B cell (primary cell): ENCODE measurements at regions of chr14 and their contacts with region 1.

Region 1: DNA sequence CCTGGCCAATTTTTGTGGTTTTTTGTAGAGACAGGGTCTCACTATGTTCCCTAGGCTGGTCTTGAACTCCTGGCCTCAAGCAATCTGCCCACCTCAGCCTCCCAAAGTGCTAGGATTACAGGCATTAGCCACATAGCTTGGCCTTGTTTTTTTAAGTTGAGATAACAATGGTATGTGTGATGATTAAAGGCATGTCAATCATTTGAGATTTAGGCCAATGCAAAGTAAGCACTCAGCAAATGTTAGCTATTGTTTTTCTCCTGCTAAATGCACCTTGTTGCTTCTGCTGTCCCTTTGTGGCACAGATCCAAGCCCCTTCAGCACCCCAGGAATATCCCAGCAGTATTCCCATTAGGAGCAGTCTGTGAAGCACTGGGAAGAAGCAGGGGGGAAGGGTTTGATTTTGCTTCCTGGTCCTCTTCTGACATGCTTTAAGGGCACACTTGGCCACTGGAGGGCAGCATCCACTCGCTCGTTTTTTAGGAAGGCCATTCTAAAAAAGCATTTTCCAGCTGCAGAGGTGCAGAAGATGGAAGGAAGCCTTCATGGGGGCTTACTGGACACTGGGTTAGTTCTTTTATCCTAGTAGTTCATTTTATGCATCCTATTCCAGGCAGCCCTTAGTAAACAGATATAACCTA is 70.2 kb upstream of the ZFP36L1 start:
- DNase-seq: peak; percentile 53
- ATAC-seq: peak; percentile 33
- H3K4me3 ChIP-seq: no peak overlapping the region
- H3K4me3 Mint-ChIP-seq: no peak overlapping the region
- H3K27ac ChIP-seq: no peak overlapping the region
- H3K27ac Mint-ChIP-seq: no peak overlapping the region
- H3K4me1 ChIP-seq: no peaks in the 10 kb centered on the region
- H3K4me1 Mint-ChIP-seq: no peaks in the 10 kb centered on the region
- H3K27me3 ChIP-seq: no peaks in the 10 kb centered on the region
- H3K27me3 Mint-ChIP-seq: no peaks in the 10 kb centered on the region
- CTCF ChIP-seq: peak; percentile 55

Region 2: GRCh38 chr14:68535404-68536017 is 327.6 kb before region 1 on chr14:
- CTCF ChIA-PET with region 1: no interaction called
- POLR2A ChIA-PET with region 1: interaction called, 10 read pairs
- intact Hi-C with region 1: no loop called
- DNase-seq: no peak
- ATAC-seq: no peak
- H3K4me3 ChIP-seq: no peak overlapping the region
- H3K4me3 Mint-ChIP-seq: no peak overlapping the region
- H3K27ac ChIP-seq: no peak overlapping the region
- H3K27ac Mint-ChIP-seq: peak overlapping the region; percentile 18
- H3K4me1 ChIP-seq: no peaks in the 10 kb centered on the region
- H3K4me1 Mint-ChIP-seq: peaks cover 3% of the 10 kb centered on the region
- H3K27me3 ChIP-seq: no peaks in the 10 kb centered on the region
- H3K27me3 Mint-ChIP-seq: no peaks in the 10 kb centered on the region
- CTCF ChIP-seq: no peak

Region 3: GRCh38 chr14:69107407-69108003 is 244.4 kb after region 1 on chr14:
- CTCF ChIA-PET with region 1: interaction called, 12 read pairs
- POLR2A ChIA-PET with region 1: no interaction called
- intact Hi-C with region 1: loop called (anchors 10 kb)
- DNase-seq: peak; percentile 44
- ATAC-seq: no peak
- H3K4me3 ChIP-seq: no peak overlapping the region
- H3K4me3 Mint-ChIP-seq: no peak overlapping the region
- H3K27ac ChIP-seq: no peak overlapping the region
- H3K27ac Mint-ChIP-seq: no peak overlapping the region
- H3K4me1 ChIP-seq: no peaks in the 10 kb centered on the region
- H3K4me1 Mint-ChIP-seq: no peaks in the 10 kb centered on the region
- H3K27me3 ChIP-seq: no peaks in the 10 kb centered on the region
- H3K27me3 Mint-ChIP-seq: no peaks in the 10 kb centered on the region
- CTCF ChIP-seq: peak; percentile 64